HEK293 (cell line): ENCODE measurements at regions of chr2 and their contacts with region 1.

Region 1: GRCh38 chr2:85635636-85636035 is 19.6 kb downstream of the USP39 start:
- H3K4me3 ChIP-seq: no peak overlapping the region
- H3K27ac ChIP-seq: no peak overlapping the region
- H3K4me1 ChIP-seq: no peaks in the 10 kb centered on the region
- CTCF ChIP-seq: no peak

Region 2: GRCh38 chr2:85437488-85438284 is 197.9 kb before region 1 on chr2:
- CTCF ChIA-PET with region 1: no interaction called
- POLR2A ChIA-PET with region 1: no interaction called
- H3K4me3 ChIP-seq: peak overlapping the region; percentile 34
- H3K27ac ChIP-seq: peak overlapping the region; percentile 84
- H3K4me1 ChIP-seq: peaks cover 6% of the 10 kb centered on the region
- CTCF ChIP-seq: no peak

Region 3: DNA sequence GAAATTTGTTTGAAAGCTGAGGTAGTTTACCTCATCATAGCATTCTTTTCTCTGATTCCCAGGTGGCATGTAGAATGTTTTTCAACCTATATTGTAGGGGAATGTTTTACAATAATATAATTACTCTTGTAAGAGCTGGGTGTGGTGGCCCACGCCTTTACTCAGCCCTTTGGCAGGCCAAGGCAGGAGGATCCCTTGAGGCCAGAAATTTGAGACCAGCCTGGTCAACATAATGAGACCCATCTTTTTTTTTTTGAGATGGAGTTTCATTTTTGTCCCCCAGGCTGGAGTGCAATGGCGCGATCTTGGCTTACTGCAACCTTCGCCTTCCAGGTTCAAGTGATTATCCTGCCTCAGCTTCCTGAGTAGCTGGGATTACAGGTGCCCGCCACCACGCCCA is 16.0 kb before region 1 on chr2:
- CTCF ChIA-PET with region 1: interaction called, 35 read pairs
- POLR2A ChIA-PET with region 1: interaction called, 3 read pairs
- H3K4me3 ChIP-seq: no peak overlapping the region
- H3K27ac ChIP-seq: no peak overlapping the region
- H3K4me1 ChIP-seq: peaks cover 8% of the 10 kb centered on the region
- CTCF ChIP-seq: no peak

Region 4: DNA sequence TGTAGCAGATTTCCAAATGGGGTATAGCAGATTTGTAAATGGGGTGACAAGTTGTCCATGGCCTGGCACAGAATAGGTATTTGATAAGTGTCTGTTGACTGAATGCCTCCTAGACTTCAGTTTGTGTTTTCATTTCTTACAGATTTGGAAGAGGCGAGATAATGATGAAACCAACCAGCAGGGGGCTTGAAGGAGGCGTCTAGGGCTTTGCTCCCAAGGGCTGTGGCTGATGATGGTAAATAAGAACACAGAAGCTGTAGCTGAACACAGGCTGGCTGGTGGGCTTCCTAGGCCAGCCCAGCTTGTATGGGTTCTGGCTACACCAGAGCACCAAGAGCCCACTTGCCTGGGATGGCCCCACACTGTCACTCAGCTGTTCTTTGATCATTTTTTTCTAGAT is 13.0 kb after region 1 on chr2:
- CTCF ChIA-PET with region 1: interaction called, 19 read pairs
- POLR2A ChIA-PET with region 1: interaction called, 4 read pairs
- H3K4me3 ChIP-seq: no peak overlapping the region
- H3K27ac ChIP-seq: no peak overlapping the region; the same call in 1 of the 2 replicates
- H3K4me1 ChIP-seq: no peaks in the 10 kb centered on the region
- CTCF ChIP-seq: no peak

Region 5: GRCh38 chr2:85678794-85679672 is 43.4 kb after region 1 on chr2:
- CTCF ChIA-PET with region 1: interaction called, 10 read pairs
- POLR2A ChIA-PET with region 1: interaction called, 3 read pairs
- H3K4me3 ChIP-seq: peak overlapping the region; percentile 13; the same call in 1 of the 2 replicates
- H3K27ac ChIP-seq: no peak overlapping the region
- H3K4me1 ChIP-seq: no peaks in the 10 kb centered on the region
- CTCF ChIP-seq: peak; percentile 90

Region 6: DNA sequence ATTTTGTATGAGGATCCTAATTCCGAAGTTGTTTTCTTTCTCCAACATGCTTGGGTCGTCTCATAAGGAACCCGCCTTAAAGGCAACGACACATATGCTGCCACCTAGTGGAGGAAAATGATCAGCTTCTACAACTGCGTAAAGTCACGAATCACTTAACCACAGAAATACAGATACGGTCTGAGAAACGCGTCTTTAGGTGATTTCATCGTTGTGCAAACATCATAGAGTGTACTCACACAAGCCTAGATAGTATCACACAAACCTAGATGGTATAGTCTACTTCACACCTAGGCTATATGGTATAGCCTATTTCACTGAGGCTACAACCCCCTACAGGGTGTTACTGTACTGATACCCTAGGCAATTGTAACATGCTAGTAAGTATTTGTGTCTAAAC is 71.7 kb after region 1 on chr2:
- CTCF ChIA-PET with region 1: interaction called, 37 read pairs
- POLR2A ChIA-PET with region 1: no interaction called
- H3K4me3 ChIP-seq: no peak overlapping the region
- H3K27ac ChIP-seq: no peak overlapping the region
- H3K4me1 ChIP-seq: no peaks in the 10 kb centered on the region
- CTCF ChIP-seq: peak; percentile 80

Region 7: GRCh38 chr2:85712849-85713602 is 77.4 kb after region 1 on chr2:
- CTCF ChIA-PET with region 1: interaction called, 37 read pairs
- POLR2A ChIA-PET with region 1: interaction called, 3 read pairs
- H3K4me3 ChIP-seq: no peak overlapping the region
- H3K27ac ChIP-seq: no peak overlapping the region
- H3K4me1 ChIP-seq: no peaks in the 10 kb centered on the region
- CTCF ChIP-seq: no peak

Region 8: DNA sequence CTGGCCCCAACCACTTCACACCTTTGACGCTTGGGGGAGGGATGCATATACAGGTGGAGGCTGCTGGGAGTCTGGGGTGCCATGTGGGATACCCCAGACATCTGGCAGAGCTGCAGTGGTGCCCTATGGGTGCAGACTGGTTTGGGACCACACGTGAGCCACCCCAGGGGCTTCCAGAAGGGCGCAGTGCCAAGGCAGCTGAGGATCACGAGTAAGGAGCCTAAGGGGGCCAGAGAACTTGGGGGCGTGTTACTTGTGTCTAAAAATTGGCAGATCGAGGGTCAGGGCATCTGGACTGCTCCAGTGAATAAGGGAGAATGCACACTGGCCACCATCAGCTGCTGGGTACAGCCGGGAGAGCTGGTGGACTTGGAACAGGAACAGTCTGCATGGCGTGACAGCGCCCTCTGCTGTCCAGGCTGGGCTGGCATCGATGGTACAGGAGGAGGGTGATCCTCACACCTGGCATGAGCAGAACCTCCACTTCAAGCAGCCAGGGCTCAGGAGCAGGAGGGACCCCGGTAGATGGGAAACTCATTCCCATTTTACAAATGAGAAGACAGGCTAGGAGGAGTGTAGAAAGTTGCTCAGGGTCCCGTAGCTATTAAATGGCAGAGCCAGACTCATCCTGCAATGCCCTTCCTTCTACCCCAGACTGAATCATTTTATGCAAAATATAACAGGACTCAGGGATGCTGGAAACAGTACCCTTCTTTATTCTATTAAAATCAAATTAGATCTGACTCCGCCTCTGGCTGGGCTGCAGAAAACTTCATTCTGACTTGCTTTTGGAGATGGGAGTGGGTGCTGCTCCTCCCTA is 178.6 kb after region 1 on chr2:
- CTCF ChIA-PET with region 1: interaction called, 15 read pairs
- POLR2A ChIA-PET with region 1: no interaction called
- H3K4me3 ChIP-seq: no peak overlapping the region
- H3K27ac ChIP-seq: no peak overlapping the region
- H3K4me1 ChIP-seq: no peaks in the 10 kb centered on the region
- CTCF ChIP-seq: peak; percentile 85

Region 9: GRCh38 chr2:85852937-85853498 is 217.4 kb after region 1 on chr2:
- CTCF ChIA-PET with region 1: no interaction called
- POLR2A ChIA-PET with region 1: no interaction called
- H3K4me3 ChIP-seq: no peak overlapping the region
- H3K27ac ChIP-seq: no peak overlapping the region
- H3K4me1 ChIP-seq: no peaks in the 10 kb centered on the region
- CTCF ChIP-seq: no peak

Region 10: DNA sequence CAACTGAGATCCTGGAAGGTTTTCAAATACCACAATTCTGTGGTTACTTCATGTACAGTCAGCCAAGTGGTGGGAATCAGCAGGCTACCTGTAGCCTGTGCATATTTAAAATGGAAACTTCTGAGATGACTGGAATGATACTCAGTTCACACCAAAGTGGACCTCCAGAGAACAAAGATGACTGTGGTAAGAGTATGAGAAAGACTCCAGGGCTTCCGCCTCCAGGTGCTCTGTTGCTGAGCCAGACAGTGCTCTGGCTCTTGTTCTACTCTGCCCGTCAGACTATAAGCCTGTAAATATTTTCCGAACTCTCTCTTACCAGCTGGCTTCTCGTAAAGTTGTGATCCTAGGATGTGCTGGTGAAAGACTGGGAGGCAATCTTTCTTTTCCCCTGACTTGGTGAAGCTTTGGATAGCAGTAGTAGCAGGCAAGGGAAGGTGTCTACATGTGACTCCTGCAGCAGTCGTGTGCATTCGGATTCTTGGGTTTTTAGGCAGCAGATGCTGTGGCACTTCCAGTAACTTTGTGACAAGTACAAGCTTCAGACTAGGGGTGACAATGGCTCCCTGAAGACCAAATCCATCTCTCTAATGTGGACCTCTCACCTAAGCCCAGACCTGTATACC is 230.0 kb after region 1 on chr2:
- CTCF ChIA-PET with region 1: no interaction called
- POLR2A ChIA-PET with region 1: no interaction called
- H3K4me3 ChIP-seq: no peak overlapping the region
- H3K27ac ChIP-seq: no peak overlapping the region
- H3K4me1 ChIP-seq: no peaks in the 10 kb centered on the region
- CTCF ChIP-seq: no peak